ENCODE measurements at regions of chr2 and their contacts with region 1.

Region 1: GRCh38 chr2:158024288-158024898 is 77.3 kb upstream of the UPP2 start:
- DNase-seq: peak; percentile 61
- H3K4me3 ChIP-seq: no peak overlapping the region
- H3K27ac ChIP-seq: no peak overlapping the region
- H3K4me1 ChIP-seq: no peaks in the 10 kb centered on the region
- H3K27me3 ChIP-seq: peaks cover 6 to 11% of the 10 kb centered on the region in 2 experiments
- CTCF ChIP-seq: peak; percentile 70 to 84
- POLR2A ChIP-seq: no peak

Region 2: DNA sequence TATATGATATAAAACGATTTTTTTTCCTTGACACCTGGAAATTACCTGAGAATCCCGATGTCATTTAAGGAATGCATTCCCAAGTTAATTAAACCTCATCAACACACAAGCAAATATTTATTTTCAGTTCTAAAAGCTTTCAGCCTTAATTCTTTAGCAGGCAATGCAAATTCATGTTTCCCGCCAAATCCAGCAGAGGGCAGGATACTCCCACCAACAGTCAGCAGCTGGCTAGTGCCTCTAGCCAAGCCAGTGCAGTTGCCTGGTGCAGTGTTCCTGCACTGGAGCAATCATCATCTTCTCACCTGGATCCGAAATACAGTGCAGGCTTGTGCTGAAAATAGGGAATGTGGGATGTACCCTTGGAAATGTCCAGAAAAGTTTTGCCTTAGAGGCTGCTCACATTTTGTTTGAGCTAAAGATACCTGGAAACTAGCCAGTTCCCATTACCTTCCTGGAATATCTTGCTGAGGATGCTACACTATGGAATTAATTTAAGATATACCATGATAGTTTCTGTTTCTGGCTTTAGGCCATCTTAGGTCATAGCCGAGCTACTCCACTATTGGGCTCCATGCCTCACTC is 532.1 kb before region 1 on chr2:
- CTCF ChIA-PET with region 1: interaction called, 10 read pairs
- POLR2A ChIA-PET with region 1: no interaction called
- dilution Hi-C with region 1: no loop called
- intact Hi-C with region 1: no loop called
- DNase-seq: peak; percentile 63
- H3K4me3 ChIP-seq: no peak overlapping the region
- H3K27ac ChIP-seq: no peak overlapping the region
- H3K4me1 ChIP-seq: peaks cover 5% of the 10 kb centered on the region
- H3K27me3 ChIP-seq: peaks cover 2 to 5% of the 10 kb centered on the region in 2 experiments
- CTCF ChIP-seq: peak; percentile 69 to 71
- POLR2A ChIP-seq: no peak

Region 3: DNA sequence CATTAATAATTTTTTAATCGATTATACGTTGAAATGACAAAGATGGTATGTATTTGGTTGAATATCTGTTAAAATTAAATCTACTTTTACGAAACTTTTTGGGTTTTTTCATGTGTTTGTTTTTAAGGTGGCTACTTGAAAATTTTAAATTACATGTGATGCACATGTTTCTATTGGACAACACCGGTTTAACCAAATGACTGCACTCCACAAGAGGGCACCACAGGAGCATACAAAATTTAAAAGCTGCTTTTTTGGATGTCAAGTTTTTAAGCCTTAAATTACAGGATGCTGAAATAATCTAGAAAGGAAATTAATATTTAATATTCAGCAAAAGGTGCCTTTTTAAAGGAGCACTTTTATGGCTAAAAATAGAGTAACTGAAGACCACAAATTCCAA is 247.0 kb before region 1 on chr2:
- CTCF ChIA-PET with region 1: interaction called, 32 read pairs
- POLR2A ChIA-PET with region 1: no interaction called
- dilution Hi-C with region 1: loop called (anchors 25 kb)
- intact Hi-C with region 1: no loop called
- DNase-seq: peak; percentile 74
- H3K4me3 ChIP-seq: no peak overlapping the region
- H3K27ac ChIP-seq: no peak overlapping the region
- H3K4me1 ChIP-seq: no peaks in the 10 kb centered on the region
- H3K27me3 ChIP-seq: no peaks in the 10 kb centered on the region
- CTCF ChIP-seq: peak; percentile 39 to 50
- POLR2A ChIP-seq: no peak

Region 4: DNA sequence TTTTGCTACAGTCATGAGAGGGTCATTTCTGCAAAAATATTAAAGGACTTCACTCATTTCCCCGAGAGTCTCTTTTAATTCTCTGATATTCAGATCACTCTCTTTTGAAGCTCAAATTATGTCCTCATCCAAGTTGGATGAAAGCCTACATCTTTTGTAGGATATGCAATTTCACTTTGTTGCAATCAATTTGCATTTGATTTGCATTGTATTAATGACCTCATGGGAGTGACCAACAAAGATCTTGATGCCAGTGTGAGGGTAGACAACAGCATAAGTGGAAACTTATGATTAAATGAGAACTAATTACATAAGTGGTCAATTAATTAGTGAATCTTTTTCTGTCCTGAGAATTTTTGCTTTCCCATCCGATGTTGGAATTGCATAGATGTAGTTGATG is 17.0 kb after region 1 on chr2:
- CTCF ChIA-PET with region 1: interaction called, 75 read pairs
- POLR2A ChIA-PET with region 1: no interaction called
- dilution Hi-C with region 1: no loop called
- intact Hi-C with region 1: no loop called
- DNase-seq: no peak
- H3K4me3 ChIP-seq: no peak overlapping the region
- H3K27ac ChIP-seq: no peak overlapping the region
- H3K4me1 ChIP-seq: no peaks in the 10 kb centered on the region
- H3K27me3 ChIP-seq: peaks cover 4 to 9% of the 10 kb centered on the region in 2 experiments
- CTCF ChIP-seq: no peak
- POLR2A ChIP-seq: no peak

Region 5: DNA sequence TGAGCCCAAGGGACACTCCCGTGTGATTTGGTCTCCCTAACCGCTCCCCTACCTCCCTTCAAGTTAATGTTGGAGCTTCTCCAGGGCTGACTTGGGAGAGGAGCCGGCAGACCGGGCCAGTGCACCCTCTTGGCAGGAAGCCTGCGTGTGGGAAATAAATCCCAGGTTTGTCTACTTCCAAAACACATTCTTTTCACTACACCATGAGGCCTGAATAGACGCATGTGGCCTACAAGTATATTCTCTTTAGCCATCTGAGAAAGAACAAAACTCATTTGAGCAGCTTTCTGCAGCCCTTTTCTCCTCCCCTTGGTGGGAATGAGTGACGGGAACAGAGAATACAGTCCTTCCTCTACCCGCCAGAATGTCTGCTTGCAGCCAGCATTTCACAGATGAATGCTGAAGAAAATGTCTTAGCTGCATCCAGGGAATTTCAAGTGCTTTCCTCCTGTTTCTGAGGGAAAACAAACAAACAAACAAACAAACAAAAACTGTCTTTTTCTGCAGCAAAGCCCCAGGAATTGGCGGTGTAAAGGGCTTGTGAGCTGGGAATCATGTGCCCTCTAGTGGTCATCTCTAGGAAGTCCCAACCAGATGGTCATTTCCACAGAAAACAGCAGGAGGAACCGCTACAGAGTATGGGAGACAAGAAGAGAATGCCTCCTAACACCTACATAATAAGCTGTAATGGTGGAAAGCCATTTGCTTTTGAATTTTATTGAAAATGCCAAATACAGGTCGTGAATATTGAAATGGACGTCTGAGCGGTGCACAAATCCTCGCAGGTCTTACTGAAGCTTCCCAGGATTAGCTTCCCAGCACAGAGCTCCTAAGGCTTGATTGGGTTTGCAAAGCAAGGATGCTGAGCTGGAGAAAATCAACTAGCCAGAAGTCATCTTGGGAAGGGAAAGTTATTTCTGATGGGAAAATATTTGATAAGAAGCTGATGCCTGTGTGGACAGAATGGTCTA is 729.5 kb after region 1 on chr2:
- CTCF ChIA-PET with region 1: interaction called, 207 read pairs
- POLR2A ChIA-PET with region 1: no interaction called
- dilution Hi-C with region 1: no loop called
- intact Hi-C with region 1: loop called (anchors 1 kb)
- DNase-seq: peak; percentile 78
- H3K4me3 ChIP-seq: no peak overlapping the region
- H3K27ac ChIP-seq: no peak overlapping the region
- H3K4me1 ChIP-seq: no peaks in the 10 kb centered on the region
- H3K27me3 ChIP-seq: peaks cover 13 to 31% of the 10 kb centered on the region in 2 experiments
- CTCF ChIP-seq: peak; percentile 77 to 92
- POLR2A ChIP-seq: no peak

Region 6: GRCh38 chr2:158761621-158762020 is 737.2 kb after region 1 on chr2:
- CTCF ChIA-PET with region 1: interaction called, 207 read pairs
- POLR2A ChIA-PET with region 1: no interaction called
- dilution Hi-C with region 1: no loop called
- intact Hi-C with region 1: no loop called
- DNase-seq: no peak
- H3K4me3 ChIP-seq: no peak overlapping the region
- H3K27ac ChIP-seq: no peak overlapping the region
- H3K4me1 ChIP-seq: no peaks in the 10 kb centered on the region
- H3K27me3 ChIP-seq: peaks cover 6 to 14% of the 10 kb centered on the region in 2 experiments
- CTCF ChIP-seq: no peak
- POLR2A ChIP-seq: no peak